Lower leg skin (tissue), 4 donors: ENCODE measurements at regions of chr16 and their contacts with region 1.

Region 1: DNA sequence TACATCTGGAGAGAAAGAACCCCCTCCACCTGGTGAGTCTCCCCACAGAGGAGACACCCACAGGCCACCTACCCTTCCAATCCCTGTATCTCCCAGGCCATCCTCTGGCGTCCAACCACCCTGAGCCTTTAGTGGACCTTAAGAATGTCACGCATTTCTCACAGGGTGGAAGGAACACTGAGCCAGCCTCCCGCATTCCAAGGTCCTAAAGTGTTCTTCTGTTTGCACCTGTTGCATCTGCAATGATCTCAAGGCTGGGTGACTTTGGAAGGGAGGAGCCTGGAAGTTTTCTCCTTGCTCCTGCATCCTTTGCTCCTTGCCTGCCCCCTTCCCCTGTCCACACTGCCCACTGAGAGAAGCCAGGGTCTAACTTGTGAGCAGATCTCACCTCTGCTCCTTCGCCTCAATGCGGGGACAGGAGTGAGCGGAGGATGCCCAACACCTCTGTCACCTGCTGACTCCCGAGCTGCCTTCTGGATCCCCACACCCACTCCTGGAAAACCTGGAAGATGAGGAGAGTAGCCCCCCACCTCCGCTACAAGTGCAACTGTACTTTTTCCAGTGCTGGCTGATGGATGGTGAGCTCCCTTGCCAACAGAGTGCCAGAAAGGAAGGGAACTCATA is 3.7 kb downstream of the CHST5 start:
- DNase-seq: no peak
- H3K4me3 ChIP-seq: no peak overlapping the region
- CTCF ChIP-seq: no peak
- POLR2A ChIP-seq: no peak

Region 2: DNA sequence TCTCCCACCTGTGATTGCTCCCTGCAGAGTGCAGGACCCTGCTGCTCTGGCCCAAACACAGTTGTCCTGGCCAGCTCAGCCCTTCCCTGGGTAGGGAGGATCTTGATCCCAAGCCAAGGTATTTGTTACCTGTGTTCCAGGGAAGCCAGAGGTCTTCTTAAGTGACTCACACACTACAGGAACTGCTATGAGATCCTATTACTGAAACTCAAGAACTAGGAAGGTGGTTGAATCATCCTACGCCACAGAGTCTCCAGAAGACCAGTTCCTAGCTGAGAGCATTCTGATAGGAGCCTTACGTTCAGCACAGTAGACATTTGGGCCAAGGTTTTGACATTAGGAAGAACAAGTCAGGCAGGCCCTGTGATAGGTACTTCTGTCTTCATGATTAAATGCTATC is 49.0 kb before region 1 on chr16:
- intact Hi-C with region 1: loop called (anchors 2 kb)
- DNase-seq: no peak
- H3K4me3 ChIP-seq: no peak overlapping the region
- CTCF ChIP-seq: no peak
- POLR2A ChIP-seq: no peak